ENCODE measurements at regions of chr9 and their contacts with region 1.

Region 1: GRCh38 chr9:100322954-100323536 is 29.7 kb downstream of the TEX10 start:
- DNase-seq: no peak
- H3K4me3 ChIP-seq: no peak overlapping the region
- CTCF ChIP-seq: peak; percentile 39

Region 2: DNA sequence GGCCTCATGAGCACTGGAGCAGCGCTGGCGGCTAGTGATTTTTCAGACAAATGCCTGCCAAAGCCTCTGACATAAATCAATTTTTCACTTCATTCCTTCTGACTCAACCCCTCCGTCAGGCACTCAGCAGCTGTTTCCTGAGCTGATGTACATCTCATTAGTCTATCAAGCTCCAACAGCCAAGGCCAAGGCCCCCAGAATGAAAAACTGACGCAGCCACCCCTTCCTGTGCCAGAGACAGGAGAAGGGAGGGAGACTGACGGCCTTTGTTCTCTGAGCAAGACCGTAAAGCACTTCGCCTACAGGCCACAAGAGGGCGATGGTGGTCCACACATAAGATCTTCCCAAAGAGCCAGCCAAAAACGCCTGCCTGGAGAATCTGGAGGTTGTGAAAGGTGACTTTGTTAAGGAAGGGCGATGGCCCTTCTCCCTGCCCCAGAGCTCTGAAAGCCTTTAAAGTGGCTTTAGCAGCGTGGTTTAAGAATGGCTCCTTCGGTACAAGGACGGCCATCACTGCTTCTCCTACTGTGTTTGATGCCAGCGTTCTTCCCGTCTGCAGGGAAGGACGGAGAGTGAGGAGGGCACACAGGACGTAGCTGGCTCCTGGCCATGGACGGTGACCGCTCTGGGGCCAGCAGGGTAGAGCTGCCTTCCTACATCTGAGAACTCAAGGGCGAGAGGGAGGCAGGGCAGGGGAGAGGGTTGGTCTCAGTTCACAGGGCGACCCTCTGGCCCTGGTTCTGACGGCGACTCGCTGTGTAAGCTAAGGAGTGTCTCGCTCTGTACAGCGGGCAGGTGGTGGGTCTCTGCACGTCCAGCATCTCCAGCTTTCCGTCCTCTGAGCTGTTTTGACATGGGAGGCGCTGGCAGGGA is 1138.3 kb before region 1 on chr9:
- CTCF ChIA-PET with region 1: interaction called, 32 read pairs
- POLR2A ChIA-PET with region 1: no interaction called
- DNase-seq: peak; percentile 51
- H3K4me3 ChIP-seq: peak overlapping the region; percentile 15; the same call in 1 of the 2 replicates
- CTCF ChIP-seq: peak; percentile 89

Region 3: GRCh38 chr9:100340224-100340623 is 17.2 kb after region 1 on chr9:
- CTCF ChIA-PET with region 1: interaction called, 64 read pairs
- POLR2A ChIA-PET with region 1: no interaction called
- DNase-seq: no peak
- H3K4me3 ChIP-seq: no peak overlapping the region
- CTCF ChIP-seq: no peak

Region 4: GRCh38 chr9:100352727-100353505 is 29.9 kb after region 1 on chr9 and contains the start of gene TEX10:
- CTCF ChIA-PET with region 1: interaction called, 59 read pairs
- POLR2A ChIA-PET with region 1: no interaction called
- DNase-seq: peak; percentile 10
- H3K4me3 ChIP-seq: peak within 1 kb of the TSS; percentile 79
- CTCF ChIP-seq: no peak

Region 5: GRCh38 chr9:100472788-100473275 is 149.8 kb after region 1 on chr9 and contains the start of gene TMEFF1:
- CTCF ChIA-PET with region 1: no interaction called
- POLR2A ChIA-PET with region 1: no interaction called
- DNase-seq: no peak
- H3K4me3 ChIP-seq: peak within 1 kb of the TSS; percentile 65
- CTCF ChIP-seq: peak; percentile 28

Region 6: DNA sequence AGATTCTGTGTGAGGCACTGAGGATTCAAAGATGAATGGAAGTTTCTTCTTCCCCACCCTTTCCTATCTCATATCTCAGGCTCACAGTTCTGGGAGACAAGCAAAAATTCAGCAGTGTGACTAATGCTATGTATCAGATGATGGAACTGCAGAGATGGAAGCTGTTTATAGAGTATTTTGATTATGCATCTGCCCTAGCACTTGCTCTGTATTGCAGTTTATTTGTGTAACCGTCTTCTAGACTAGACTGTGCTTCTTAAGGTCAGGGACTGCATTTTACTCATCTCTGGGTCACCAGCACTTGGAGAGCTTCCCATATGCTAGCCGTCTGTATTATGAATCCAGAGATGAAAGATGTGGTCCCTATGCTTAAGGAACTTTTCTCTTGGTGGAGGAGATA is 267.4 kb after region 1 on chr9:
- CTCF ChIA-PET with region 1: interaction called, 40 read pairs
- POLR2A ChIA-PET with region 1: no interaction called
- DNase-seq: no peak
- H3K4me3 ChIP-seq: no peak overlapping the region
- CTCF ChIP-seq: no peak

Region 7: DNA sequence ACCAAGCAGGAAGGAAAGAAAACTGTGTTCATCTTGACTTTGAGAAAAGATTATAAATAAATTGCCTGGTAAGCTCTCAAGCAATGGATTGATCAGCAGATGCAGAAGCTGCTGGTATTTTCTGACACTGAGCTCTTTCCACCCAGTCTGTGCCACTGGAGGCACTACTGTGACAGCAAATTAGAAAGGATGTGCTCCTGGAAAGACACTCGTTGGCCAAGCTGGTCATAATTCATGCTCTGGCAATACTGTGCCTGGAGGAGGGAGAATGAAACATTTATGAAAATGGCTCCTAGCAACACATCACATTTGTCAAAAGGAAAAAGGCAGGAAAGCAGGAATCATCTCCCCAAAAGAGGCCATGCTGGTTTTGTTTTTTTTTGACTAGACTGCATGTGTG is 339.1 kb after region 1 on chr9:
- CTCF ChIA-PET with region 1: no interaction called
- POLR2A ChIA-PET with region 1: no interaction called
- DNase-seq: no peak
- H3K4me3 ChIP-seq: no peak overlapping the region
- CTCF ChIP-seq: no peak

Measured in AG04449 (cell line).